HepG2 (cell line): ENCODE measurements at regions of chr9 and their contacts with region 1.

Region 1: GRCh38 chr9:23573800-23574199 is 252.2 kb downstream of the ELAVL2 start:
- DNase-seq: no peak
- ATAC-seq: no peak
- H3K4me3 ChIP-seq: no peak overlapping the region
- H3K27ac ChIP-seq: no peak overlapping the region
- H3K4me1 ChIP-seq: no peaks in the 10 kb centered on the region
- H3K27me3 ChIP-seq: no peaks in the 10 kb centered on the region
- CTCF ChIP-seq: no peak
- EP300 ChIP-seq: no peak
- POLR2A ChIP-seq: no peak
- RAD21 ChIP-seq: no peak

Region 2: DNA sequence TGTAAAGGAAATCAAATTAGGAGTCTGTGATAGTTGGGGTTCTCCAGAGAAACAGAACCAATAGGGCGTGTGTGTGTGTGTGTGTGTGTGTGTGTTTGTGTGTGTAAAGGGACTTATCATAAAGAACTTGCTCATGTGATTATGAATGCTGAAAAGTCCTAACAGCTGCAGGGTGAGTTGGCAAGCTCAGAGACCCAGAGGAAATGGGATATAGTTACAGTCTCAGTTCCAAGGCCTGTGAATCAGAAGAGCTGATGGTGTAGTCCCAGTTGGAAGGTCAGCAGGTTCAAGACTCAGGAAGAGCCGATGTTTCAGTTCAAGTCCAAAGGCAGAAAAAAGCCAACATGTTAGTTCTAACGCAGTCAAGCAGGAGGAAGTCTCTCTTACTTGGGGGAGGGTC is 38.1 kb after region 1 on chr9:
- CTCF ChIA-PET with region 1: no interaction called
- POLR2A ChIA-PET with region 1: no interaction called
- in situ Hi-C with region 1: no loop called
- intact Hi-C with region 1: loop called (anchors 1 kb)
- DNase-seq: no peak
- ATAC-seq: no peak
- H3K4me3 ChIP-seq: no peak overlapping the region
- H3K27ac ChIP-seq: no peak overlapping the region
- H3K4me1 ChIP-seq: no peaks in the 10 kb centered on the region
- H3K27me3 ChIP-seq: no peaks in the 10 kb centered on the region
- CTCF ChIP-seq: no peak
- EP300 ChIP-seq: no peak
- POLR2A ChIP-seq: no peak
- RAD21 ChIP-seq: no peak

Region 3: DNA sequence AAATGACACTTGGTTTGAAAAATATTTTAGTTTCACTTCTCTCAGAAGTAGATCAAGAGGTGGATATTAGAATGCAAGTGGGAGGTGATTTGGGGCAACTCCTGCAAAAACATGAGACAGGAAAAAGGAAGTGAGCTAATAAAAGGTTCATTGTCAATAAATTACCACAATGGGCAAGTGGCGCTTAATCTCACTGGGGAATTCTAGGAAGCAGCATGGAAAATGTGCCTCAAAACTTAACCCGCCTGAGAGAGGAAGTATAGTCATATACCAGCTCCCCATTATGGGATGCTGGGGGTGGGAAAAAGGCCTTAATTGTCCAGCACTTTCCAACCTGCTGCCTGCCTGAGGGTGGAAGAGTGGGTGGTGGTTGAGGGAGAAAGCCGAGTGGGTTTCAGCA is 48.1 kb after region 1 on chr9:
- CTCF ChIA-PET with region 1: no interaction called
- POLR2A ChIA-PET with region 1: no interaction called
- in situ Hi-C with region 1: no loop called
- intact Hi-C with region 1: no loop called
- DNase-seq: no peak
- ATAC-seq: no peak
- H3K4me3 ChIP-seq: no peak overlapping the region
- H3K27ac ChIP-seq: no peak overlapping the region
- H3K4me1 ChIP-seq: no peaks in the 10 kb centered on the region
- H3K27me3 ChIP-seq: no peaks in the 10 kb centered on the region
- CTCF ChIP-seq: no peak
- EP300 ChIP-seq: no peak
- POLR2A ChIP-seq: no peak
- RAD21 ChIP-seq: no peak